Sigmoid colon (tissue), 7 donors: ENCODE measurements at regions of chr12 and their contacts with region 1.

Region 1: GRCh38 chr12:110280779-110281548 is at the start of gene ATP2A2:
- DNase-seq: peak; percentile 94
- H3K4me3 ChIP-seq: peak within 1 kb of the TSS; percentile 77 to 92 (median 84)
- H3K27ac ChIP-seq: peak within 1 kb of the TSS; percentile 96 to 99 (median 98)
- H3K4me1 ChIP-seq: peaks cover 0 to 50% (median 47%) of the 10 kb centered on the region in 4 donors
- H3K27me3 ChIP-seq: no peaks in the 10 kb centered on the region
- CTCF ChIP-seq: no peak
- EP300 ChIP-seq: no peak
- POLR2A ChIP-seq: peak; percentile 76 to 79
- total RNA-seq, gene ATP2A2: 79.5 to 121 (median 93.7) TPM

Region 2: DNA sequence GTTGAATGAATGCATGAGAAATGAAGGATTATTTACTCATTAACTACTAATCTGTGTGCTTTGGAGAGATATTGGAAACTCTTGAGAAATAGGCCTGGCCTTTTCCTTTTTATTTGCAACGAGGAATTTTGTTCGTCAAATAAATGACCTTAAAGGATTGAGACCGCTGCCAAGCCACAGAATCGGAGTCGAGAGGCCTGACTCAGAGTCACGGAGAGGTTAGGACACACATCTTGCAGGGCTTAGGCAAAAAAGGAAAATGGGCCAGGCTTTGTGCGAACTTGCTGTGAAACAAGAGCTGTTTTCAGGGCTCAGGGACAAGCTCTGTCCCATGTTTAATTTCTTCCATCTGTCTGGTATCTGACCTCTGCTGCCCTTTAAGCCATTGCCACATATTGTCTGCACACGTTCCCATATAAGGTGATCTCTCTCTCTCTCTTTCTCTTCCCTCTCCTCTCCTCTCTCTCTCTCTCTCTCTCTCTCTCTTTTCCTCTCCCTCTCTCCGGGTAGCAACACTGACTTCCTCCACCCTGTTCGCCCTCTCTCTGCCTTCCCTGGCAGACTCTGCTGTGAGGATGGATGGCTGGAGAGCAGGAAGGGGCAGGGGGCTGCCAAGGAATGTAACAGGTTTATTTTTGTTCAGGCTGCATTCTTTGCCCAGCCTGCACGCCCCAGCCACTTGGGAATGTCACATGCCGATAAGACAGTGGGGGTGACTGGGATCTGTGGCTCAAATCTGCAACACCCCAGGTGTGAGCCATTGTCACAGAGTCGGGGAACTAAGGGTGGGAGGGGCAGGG is 171.7 kb before region 1 on chr12:
- intact Hi-C with region 1: loop called (anchors 5 kb)
- DNase-seq: peak; percentile 98
- H3K4me3 ChIP-seq: peak overlapping the region in 3 of 4 donors; percentile 13 to 20 (median 18)
- H3K27ac ChIP-seq: peak overlapping the region; percentile 85 to 95 (median 91)
- H3K4me1 ChIP-seq: peaks cover 0 to 67% (median 44%) of the 10 kb centered on the region in 4 donors
- H3K27me3 ChIP-seq: no peaks in the 10 kb centered on the region
- CTCF ChIP-seq: peak in 2 of 4 experiments; percentile 30 to 62
- EP300 ChIP-seq: peak; percentile 75 to 88 (median 79)
- POLR2A ChIP-seq: peak in 1 of 2 donors; percentile 26

Region 3: GRCh38 chr12:110124184-110124995 is 156.6 kb before region 1 on chr12 and contains the start of gene IFT81:
- intact Hi-C with region 1: loop called (anchors 5 kb)
- DNase-seq: peak; percentile 98
- H3K4me3 ChIP-seq: peak within 1 kb of the TSS; percentile 83 to 97 (median 92)
- H3K27ac ChIP-seq: peak within 1 kb of the TSS; percentile 91 to 97 (median 93)
- H3K4me1 ChIP-seq: peaks cover 0 to 37% (median 16%) of the 10 kb centered on the region in 4 donors
- H3K27me3 ChIP-seq: no peaks in the 10 kb centered on the region
- CTCF ChIP-seq: no peak
- EP300 ChIP-seq: no peak
- POLR2A ChIP-seq: peak; percentile 53 to 56
- total RNA-seq, gene IFT81: 20.4 to 42.7 (median 37.0) TPM

Region 4: GRCh38 chr12:110224379-110225304 is 56.3 kb before region 1 on chr12:
- intact Hi-C with region 1: loop called (anchors 2 kb)
- DNase-seq: peak; percentile 77
- H3K4me3 ChIP-seq: peak overlapping the region in 3 of 4 donors; percentile 4 to 28 (median 15)
- H3K27ac ChIP-seq: peak overlapping the region; percentile 64 to 80 (median 68)
- H3K4me1 ChIP-seq: peaks cover 0 to 34% (median 24%) of the 10 kb centered on the region in 4 donors
- H3K27me3 ChIP-seq: no peaks in the 10 kb centered on the region
- CTCF ChIP-seq: peak; percentile 37 to 60 (median 48)
- EP300 ChIP-seq: no peak
- POLR2A ChIP-seq: no peak

Region 5: DNA sequence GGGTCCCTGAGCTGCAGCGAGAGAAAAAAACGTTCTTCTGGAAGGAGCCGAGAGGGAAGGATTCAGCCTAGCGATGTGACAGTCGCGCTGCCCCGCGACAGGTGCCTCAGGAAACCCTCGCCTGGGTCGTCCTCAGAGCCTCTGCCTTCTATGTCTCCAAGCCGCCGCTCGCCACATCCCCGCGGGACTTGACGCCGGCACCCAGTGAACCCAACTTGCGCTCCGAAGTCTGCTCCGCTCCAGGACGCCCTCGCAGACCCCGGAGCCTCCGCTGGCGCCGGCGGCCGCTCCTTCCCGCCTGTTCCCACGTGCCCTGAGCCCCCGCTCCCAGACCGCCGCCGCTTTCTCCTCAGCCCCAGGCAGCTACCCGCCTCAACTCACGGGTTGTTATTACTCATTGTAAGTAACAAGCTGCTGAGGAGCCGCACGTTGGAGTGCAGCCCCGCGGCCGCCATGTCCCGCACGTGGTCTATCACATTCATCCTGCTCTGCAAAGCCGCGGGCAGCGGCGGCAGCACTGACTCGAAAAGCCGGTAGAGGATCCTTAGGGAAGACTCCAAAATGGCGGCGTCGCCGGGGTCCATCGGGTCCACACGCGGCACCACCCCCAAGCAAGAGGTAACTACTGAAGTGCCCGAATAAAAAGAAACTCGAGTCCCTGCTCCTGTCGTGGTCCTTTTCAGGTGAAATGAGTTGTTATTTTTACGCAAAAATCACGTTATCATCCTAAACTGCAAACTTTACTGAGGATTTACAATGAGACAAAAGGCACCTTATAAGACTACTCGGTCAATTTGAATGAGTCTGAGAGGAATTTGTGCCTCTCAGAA is 122.4 kb after region 1 on chr12 and contains the start of gene ANAPC7:
- intact Hi-C with region 1: loop called (anchors 5 kb)
- DNase-seq: peak; percentile 96
- H3K4me3 ChIP-seq: peak within 1 kb of the TSS; percentile 79 to 86 (median 82)
- H3K27ac ChIP-seq: peak within 1 kb of the TSS; percentile 86 to 94 (median 89)
- H3K4me1 ChIP-seq: peaks cover 0 to 26% (median 17%) of the 10 kb centered on the region in 4 donors
- H3K27me3 ChIP-seq: no peaks in the 10 kb centered on the region
- CTCF ChIP-seq: peak in 2 of 4 experiments; percentile 7 to 21
- EP300 ChIP-seq: no peak
- POLR2A ChIP-seq: peak; percentile 31 to 57
- total RNA-seq, gene ANAPC7: 29.9 to 65.6 (median 53.0) TPM